Panc1 (cell line): ENCODE measurements at regions of chr9 and their contacts with region 1.

Region 1: DNA sequence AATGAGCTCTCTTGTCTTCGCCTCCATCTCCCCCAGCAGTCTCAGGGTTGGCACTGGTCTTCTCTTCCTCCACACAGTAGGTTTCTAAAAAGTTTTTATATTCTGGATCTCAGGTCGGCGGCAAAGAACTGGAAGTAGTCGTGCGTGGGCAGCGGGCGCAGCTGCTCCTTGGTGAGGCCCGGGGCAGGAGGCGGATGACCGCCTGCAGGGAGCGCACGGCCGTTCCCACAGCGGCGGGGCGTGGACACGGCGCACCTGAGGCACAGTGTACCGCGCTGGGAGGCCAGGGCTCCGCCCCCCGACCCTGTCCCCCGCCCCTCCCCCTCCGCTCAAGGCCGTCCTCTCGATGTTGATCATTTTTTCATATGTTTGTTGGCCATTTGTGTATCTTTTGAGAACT is 92.4 kb downstream of the STX17 start:
- DNase-seq: no peak
- ATAC-seq: no peak
- H3K4me3 ChIP-seq: no peak overlapping the region
- H3K27ac ChIP-seq: no peak overlapping the region
- H3K4me1 ChIP-seq: no peaks in the 10 kb centered on the region
- H3K27me3 ChIP-seq: no peaks in the 10 kb centered on the region
- CTCF ChIP-seq: no peak

Region 2: DNA sequence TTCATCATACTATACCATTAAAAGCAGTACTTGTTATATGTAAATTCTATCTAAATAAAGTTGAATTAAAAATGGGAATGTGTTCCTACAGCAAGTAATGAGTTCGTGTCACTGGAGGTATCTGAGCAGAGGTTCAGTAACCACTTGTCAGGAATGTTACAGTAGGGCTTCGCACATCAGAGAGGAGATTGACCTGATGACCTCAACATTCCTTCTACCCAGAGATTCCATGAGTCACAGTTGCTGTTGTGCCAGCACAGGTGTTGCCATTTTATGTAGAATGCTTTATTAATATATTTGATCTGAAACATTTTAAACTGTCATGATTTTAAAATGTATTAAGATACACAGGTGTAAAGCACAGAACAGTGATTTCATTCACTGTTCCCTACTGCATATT is 32.1 kb before region 1 on chr9:
- CTCF ChIA-PET with region 1: no interaction called
- POLR2A ChIA-PET with region 1: no interaction called
- in situ Hi-C with region 1: no loop called
- intact Hi-C with region 1: no loop called
- DNase-seq: no peak
- ATAC-seq: no peak
- H3K4me3 ChIP-seq: no peak overlapping the region
- H3K27ac ChIP-seq: no peak overlapping the region
- H3K4me1 ChIP-seq: no peaks in the 10 kb centered on the region; the same call in 1 of the 2 replicates
- H3K27me3 ChIP-seq: no peaks in the 10 kb centered on the region
- CTCF ChIP-seq: no peak

Region 3: GRCh38 chr9:99986642-99987041 is 12.2 kb before region 1 on chr9:
- CTCF ChIA-PET with region 1: no interaction called
- POLR2A ChIA-PET with region 1: no interaction called
- in situ Hi-C with region 1: no loop called
- intact Hi-C with region 1: loop called (anchors 2 kb)
- DNase-seq: no peak
- ATAC-seq: no peak
- H3K4me3 ChIP-seq: no peak overlapping the region
- H3K27ac ChIP-seq: no peak overlapping the region
- H3K4me1 ChIP-seq: no peaks in the 10 kb centered on the region
- H3K27me3 ChIP-seq: no peaks in the 10 kb centered on the region
- CTCF ChIP-seq: no peak